Left colon (tissue), 2 donors: ENCODE measurements at regions of chr1 and their contacts with region 1.

Region 1: GRCh38 chr1:54488779-54489626 is 59.0 kb upstream of the ACOT11 start:
- DNase-seq: peak; percentile 72 to 82
- ATAC-seq: peak; percentile 66

Region 2: DNA sequence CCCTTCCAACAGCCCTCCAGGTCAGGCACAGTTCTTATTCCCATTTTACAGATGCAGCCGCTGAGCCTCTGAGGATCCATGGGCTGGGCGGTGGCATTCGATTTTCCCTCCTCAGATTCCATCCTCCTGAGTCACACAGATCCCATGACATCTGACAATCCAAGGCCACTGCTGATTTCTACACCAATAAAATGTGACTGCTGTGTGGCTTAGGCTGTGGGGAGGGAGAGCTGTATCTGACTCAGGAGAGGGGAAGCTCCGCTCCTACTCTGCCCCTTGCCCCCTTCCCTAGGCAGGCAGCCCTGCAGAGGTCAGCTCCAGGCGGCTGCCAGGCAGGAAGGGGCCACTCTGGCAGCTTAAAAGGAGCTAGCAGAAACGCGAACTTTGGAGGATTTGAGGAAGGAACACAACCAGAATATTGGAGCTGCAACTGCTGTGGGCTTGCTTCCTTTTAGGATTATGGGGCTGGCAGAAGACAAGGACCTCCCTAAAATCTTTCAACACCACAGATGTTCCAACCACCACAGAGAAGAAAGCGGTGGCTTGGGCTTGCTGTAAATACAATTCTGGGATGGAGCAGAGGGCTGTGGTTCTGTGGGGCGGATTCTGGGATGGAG is 239.1 kb before region 1 on chr1:
- intact Hi-C with region 1: no loop called
- DNase-seq: no peak
- ATAC-seq: peak; percentile 64

Region 3: DNA sequence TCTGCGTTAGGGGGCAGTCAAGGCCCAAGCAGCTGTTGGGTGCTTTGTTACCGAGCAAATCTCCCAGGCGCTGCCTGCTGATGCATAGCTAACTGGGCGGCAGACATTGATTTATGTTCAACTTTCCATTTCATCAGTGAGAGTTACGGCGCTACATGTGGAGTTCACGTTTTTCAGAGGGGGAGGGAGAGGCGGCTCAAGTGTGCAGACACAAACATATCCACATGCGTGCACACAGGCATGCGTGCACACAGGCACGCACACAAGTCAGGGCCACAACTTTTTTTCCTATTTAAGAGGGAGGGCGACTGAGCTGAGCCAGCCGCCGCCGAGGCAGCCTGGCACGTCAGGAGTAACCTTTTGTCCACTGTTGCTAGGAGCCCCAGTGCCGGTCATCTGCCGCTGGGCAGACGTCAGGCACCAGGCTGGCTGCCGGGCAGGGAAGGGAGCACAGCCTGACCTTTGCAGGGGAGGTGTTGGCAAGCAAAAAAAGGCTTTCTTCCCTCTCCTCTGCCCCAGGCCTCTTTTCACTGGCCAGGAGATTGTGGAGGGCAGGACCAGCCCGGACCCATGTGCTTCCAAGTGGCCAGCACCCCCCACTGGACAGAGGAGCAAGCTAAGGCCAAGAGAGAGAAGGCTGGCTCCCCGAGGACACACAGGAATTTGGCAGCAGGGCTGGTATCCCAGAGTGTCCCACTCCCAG is 215.8 kb before region 1 on chr1:
- intact Hi-C with region 1: loop called in 1 of 2 experiments (anchors 5 kb)
- DNase-seq: peak in 1 of 2 donors; percentile 68
- ATAC-seq: no peak

Region 4: GRCh38 chr1:54297596-54298283 is 191.3 kb before region 1 on chr1:
- intact Hi-C with region 1: no loop called
- DNase-seq: peak; percentile 74 to 83
- ATAC-seq: peak; percentile 75